ENCODE measurements at regions of chr17 and their contacts with region 1.

Region 1: GRCh38 chr17:30808785-30809286 is 15.7 kb downstream of the CRLF3 start:
- DNase-seq: peak; percentile 86
- ATAC-seq: peak; percentile 96
- H3K4me3 ChIP-seq: peak overlapping the region in 4 of 5 experiments; percentile 11 to 41 (median 30)
- H3K4me3 Mint-ChIP-seq: peak overlapping the region; percentile 87
- H3K27ac ChIP-seq: peak overlapping the region; percentile 73 to 84
- H3K27ac Mint-ChIP-seq: peak overlapping the region; percentile 97
- H3K4me1 ChIP-seq: peaks cover 59 to 73% of the 10 kb centered on the region in 2 donors
- H3K4me1 Mint-ChIP-seq: peaks cover 65% of the 10 kb centered on the region
- H3K27me3 ChIP-seq: no peaks in the 10 kb centered on the region
- H3K27me3 Mint-ChIP-seq: no peaks in the 10 kb centered on the region
- CTCF ChIP-seq: no peak

Region 2: GRCh38 chr17:30824356-30825145 is 15.7 kb after region 1 on chr17 and contains the start of gene CRLF3:
- CTCF ChIA-PET with region 1: interaction called, 207 read pairs
- POLR2A ChIA-PET with region 1: interaction called, 66 read pairs
- intact Hi-C with region 1: loop called (anchors 1 kb)
- DNase-seq: peak; percentile 93
- ATAC-seq: peak; percentile 96
- H3K4me3 ChIP-seq: peak within 1 kb of the TSS; percentile 87 to 97 (median 95)
- H3K4me3 Mint-ChIP-seq: peak within 1 kb of the TSS; percentile 94
- H3K27ac ChIP-seq: peak within 1 kb of the TSS; percentile 74 to 90
- H3K27ac Mint-ChIP-seq: peak within 1 kb of the TSS; percentile 97
- H3K4me1 ChIP-seq: peaks cover 41 to 44% of the 10 kb centered on the region in 2 donors
- H3K4me1 Mint-ChIP-seq: peaks cover 42% of the 10 kb centered on the region
- H3K27me3 ChIP-seq: no peaks in the 10 kb centered on the region
- H3K27me3 Mint-ChIP-seq: no peaks in the 10 kb centered on the region
- CTCF ChIP-seq: peak; percentile 73
- total RNA-seq, gene CRLF3: 83.2 and 88.3 TPM in 2 replicates

Region 3: DNA sequence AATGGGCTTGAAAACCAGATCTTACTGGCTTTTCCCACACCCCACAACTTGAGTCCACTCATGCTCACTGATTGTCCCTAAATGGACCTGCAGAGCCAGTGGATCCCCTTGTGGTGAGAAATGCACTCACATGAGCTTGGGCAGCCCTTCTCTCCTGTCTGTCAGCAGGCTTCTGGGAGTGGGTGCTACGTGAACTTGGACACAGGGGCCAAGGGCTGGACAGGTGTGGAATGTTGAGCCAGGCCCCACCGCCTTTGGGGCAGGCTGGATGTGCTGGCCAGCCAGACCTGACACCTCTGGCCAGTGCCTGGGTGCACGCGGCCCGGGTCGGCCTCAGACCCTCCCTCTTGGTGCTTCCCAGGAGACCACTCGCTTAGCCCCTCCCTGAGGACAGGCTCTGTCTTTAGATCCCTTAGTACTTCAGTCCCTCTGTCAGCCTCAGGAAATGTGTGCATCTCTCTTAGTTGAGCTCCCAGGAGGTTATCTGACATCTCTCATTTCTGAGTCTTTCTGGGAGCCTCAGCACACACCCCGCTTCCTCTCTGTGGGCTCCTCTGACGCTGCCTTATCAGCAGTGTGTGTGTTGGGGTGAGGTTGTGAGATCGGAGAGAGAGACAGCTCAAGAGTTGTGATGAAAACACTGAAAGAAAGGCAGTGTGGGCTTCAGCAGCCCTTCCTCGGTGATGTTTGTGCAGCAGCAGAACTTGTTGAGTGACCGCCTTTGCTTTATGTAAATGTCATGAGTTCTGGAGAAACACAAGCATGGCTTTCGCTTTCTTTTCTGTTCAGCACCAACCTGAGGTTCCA is 699.7 kb after region 1 on chr17:
- CTCF ChIA-PET with region 1: no interaction called
- POLR2A ChIA-PET with region 1: no interaction called
- intact Hi-C with region 1: no loop called
- DNase-seq: peak; percentile 79
- ATAC-seq: peak; percentile 81
- H3K4me3 ChIP-seq: peak overlapping the region; percentile 24 to 65 (median 38)
- H3K4me3 Mint-ChIP-seq: peak overlapping the region; percentile 94
- H3K27ac ChIP-seq: peak overlapping the region; percentile 83 to 89
- H3K27ac Mint-ChIP-seq: peak overlapping the region; percentile 96
- H3K4me1 ChIP-seq: peaks cover 49 to 56% of the 10 kb centered on the region in 2 donors
- H3K4me1 Mint-ChIP-seq: peaks cover 61% of the 10 kb centered on the region
- H3K27me3 ChIP-seq: no peaks in the 10 kb centered on the region
- H3K27me3 Mint-ChIP-seq: no peaks in the 10 kb centered on the region
- CTCF ChIP-seq: peak; percentile 67

Measured in B cell (primary cell).